Endothelial cell of umbilical vein (primary cell): ENCODE measurements at regions of chr3 and their contacts with region 1.

Region 1: GRCh38 chr3:108489771-108490170 is 20.6 kb downstream of the MYH15 start:
- DNase-seq: peak; percentile 75
- H3K4me3 ChIP-seq: no peak overlapping the region
- H3K27ac ChIP-seq: no peak overlapping the region
- H3K4me1 ChIP-seq: peaks cover 12% of the 10 kb centered on the region
- H3K27me3 ChIP-seq: no peaks in the 10 kb centered on the region
- CTCF ChIP-seq: peak; percentile 51 to 57
- POLR2A ChIP-seq: no peak

Region 2: DNA sequence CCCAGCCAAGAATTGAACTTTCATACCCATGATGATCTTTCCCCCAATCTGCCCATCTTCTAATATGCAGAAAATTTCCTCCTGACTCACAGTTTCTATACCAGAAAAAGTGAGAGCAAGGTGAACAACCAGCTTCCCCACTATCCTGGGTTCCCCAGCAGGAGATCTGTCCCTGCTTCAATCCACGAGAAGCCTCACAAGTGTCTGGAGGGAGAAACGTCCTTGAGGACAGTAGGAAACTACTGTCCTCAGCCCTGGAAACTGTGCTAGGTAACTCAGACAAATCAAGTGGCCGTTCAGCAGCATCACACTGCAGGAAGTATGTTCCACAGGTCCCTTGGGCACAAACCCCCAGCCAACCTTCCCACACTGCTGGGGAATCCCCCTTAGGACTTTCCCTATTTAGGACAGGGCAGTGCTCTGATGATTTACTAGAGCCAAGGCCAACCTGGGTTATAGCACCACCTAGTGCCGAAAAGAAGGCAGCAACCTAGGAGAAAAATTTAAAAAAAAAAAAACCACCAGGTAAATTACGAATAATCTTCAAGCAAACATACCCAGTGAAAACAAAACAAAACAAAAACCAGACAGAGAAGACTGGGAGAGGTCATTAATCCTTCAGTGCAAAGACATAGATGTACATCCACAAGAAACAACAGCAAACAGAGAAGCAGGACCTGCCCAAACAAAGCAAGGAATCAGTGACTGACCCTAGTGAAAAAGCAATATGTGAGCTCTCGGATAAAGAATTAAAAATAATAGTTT is 592.2 kb after region 1 on chr3:
- CTCF ChIA-PET with region 1: no interaction called
- POLR2A ChIA-PET with region 1: no interaction called
- dilution Hi-C with region 1: no loop called
- intact Hi-C with region 1: loop called (anchors 1 kb)
- DNase-seq: peak; percentile 46
- H3K4me3 ChIP-seq: no peak overlapping the region
- H3K27ac ChIP-seq: no peak overlapping the region
- H3K4me1 ChIP-seq: no peaks in the 10 kb centered on the region
- H3K27me3 ChIP-seq: no peaks in the 10 kb centered on the region
- CTCF ChIP-seq: peak; percentile 66 to 67
- POLR2A ChIP-seq: no peak